ENCODE measurements at regions of chr21 and their contacts with region 1.

Region 1: DNA sequence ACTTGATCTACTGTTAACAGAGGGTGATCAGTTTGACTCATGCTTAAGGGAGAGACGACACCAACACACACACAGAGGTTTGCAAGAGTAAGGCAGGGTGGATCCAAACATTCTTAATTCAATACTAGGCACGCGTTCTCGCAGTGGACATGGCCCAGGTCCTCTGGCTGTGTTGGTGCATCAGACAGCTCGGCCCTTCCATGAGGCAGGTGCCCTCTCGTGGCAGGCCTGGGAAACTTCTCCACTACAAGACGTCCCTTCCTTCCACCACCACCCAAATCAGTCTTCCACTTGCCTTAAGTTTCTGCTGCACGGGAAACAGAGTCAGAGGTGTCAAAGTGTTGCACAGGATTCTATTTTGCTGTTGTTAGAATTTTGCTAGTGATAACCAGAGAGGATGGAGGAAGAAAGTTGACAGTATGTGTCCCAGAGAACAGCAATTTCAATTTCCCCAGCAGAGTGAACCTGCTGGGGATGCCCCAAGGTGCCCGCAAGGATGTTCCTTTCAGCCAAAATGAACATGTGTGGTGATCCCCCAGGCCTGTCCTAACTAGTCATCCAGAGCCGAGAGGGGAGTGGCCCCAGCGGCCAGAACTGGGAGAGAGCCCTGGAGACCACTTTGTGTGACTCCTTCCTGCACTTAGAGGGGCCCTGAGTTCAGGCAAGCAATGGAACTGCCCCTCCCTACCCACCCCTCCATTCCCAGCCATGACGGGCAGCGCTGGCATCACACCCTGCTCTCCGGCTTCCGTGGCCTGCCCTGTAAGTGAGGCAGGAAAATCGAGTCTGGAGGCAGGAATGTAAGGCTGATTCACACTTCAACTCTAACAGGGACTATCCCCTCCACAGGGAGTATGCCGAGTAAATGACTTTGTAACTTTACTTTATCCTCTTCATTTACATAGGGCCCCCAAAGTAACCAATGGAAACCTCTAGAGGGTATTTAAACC is 34.8 kb downstream of the MX1 start:
- DNase-seq: peak; percentile 72
- ATAC-seq: peak; percentile 97
- H3K4me3 ChIP-seq: no peak overlapping the region
- H3K27ac ChIP-seq: no peak overlapping the region
- H3K4me1 ChIP-seq: no peaks in the 10 kb centered on the region
- H3K27me3 ChIP-seq: no peaks in the 10 kb centered on the region
- CTCF ChIP-seq: peak; percentile 73
- POLR2A ChIP-seq: no peak
- RAD21 ChIP-seq: peak; percentile 78

Region 2: GRCh38 chr21:41121785-41122421 is 338.9 kb before region 1 on chr21:
- CTCF ChIA-PET with region 1: no interaction called
- POLR2A ChIA-PET with region 1: no interaction called
- dilution Hi-C with region 1: no loop called
- in situ Hi-C with region 1: loop called (anchors 10 kb)
- intact Hi-C with region 1: loop called (anchors 2 kb)
- DNase-seq: peak; percentile 63
- ATAC-seq: peak; percentile 82
- H3K4me3 ChIP-seq: no peak overlapping the region
- H3K27ac ChIP-seq: no peak overlapping the region
- H3K4me1 ChIP-seq: no peaks in the 10 kb centered on the region
- H3K27me3 ChIP-seq: peaks cover 1% of the 10 kb centered on the region
- CTCF ChIP-seq: peak; percentile 78
- POLR2A ChIP-seq: no peak
- RAD21 ChIP-seq: peak; percentile 72

Region 3: GRCh38 chr21:41289426-41289825 is 171.4 kb before region 1 on chr21:
- CTCF ChIA-PET with region 1: no interaction called
- POLR2A ChIA-PET with region 1: interaction called, 3 read pairs
- dilution Hi-C with region 1: no loop called
- in situ Hi-C with region 1: loop called (anchors 5 kb)
- intact Hi-C with region 1: no loop called
- DNase-seq: peak; percentile 4
- ATAC-seq: peak; percentile 35
- H3K4me3 ChIP-seq: no peak overlapping the region
- H3K27ac ChIP-seq: no peak overlapping the region
- H3K4me1 ChIP-seq: no peaks in the 10 kb centered on the region
- H3K27me3 ChIP-seq: peaks cover 12% of the 10 kb centered on the region
- CTCF ChIP-seq: no peak
- POLR2A ChIP-seq: no peak
- RAD21 ChIP-seq: no peak

Region 4: DNA sequence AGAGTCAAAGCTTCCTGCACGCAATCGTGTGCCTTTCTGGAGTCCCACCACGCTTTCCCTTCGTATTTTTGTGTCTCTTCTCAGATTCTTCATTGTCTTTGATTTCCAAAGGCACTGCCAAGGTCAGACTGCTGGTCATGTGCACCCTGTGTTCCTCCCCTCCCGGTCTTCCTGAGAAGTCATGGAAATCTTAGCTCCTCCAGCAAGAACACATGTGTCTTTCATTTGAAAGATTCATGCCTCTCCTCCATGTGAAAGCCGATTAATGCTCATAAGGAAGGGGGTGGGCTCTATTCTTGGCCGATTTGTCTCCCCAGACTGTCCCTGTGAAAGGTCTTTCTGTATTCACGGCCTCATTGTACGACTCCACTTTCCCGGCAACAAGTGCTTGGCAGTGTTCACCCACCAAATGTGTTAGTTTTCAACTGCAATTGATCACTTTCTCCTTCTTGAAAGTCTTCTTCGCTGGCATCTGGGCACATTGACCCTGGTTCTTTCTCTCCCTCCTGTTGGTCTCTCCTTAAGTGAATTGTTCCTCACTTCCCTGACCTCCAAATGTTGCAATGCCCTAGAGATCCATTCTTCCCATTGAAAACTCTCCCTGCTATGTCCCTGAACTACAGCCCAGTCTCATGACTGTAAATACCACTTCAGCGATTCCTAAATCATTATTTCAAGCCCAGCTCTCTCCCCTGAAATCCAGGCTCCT is 73.7 kb before region 1 on chr21:
- CTCF ChIA-PET with region 1: no interaction called
- POLR2A ChIA-PET with region 1: no interaction called
- dilution Hi-C with region 1: no loop called
- in situ Hi-C with region 1: no loop called
- intact Hi-C with region 1: no loop called
- DNase-seq: no peak
- ATAC-seq: no peak
- H3K4me3 ChIP-seq: no peak overlapping the region
- H3K27ac ChIP-seq: no peak overlapping the region
- H3K4me1 ChIP-seq: no peaks in the 10 kb centered on the region
- H3K27me3 ChIP-seq: no peaks in the 10 kb centered on the region; the same call in 1 of the 2 replicates
- CTCF ChIP-seq: no peak
- POLR2A ChIP-seq: no peak
- RAD21 ChIP-seq: no peak

Region 5: GRCh38 chr21:41425954-41426675 is 34.7 kb before region 1 on chr21 and contains the start of gene MX1:
- CTCF ChIA-PET with region 1: no interaction called
- POLR2A ChIA-PET with region 1: no interaction called
- dilution Hi-C with region 1: no loop called
- in situ Hi-C with region 1: no loop called
- intact Hi-C with region 1: no loop called
- DNase-seq: peak; percentile 10
- ATAC-seq: peak; percentile 86
- H3K4me3 ChIP-seq: peak within 1 kb of the TSS; percentile 58
- H3K27ac ChIP-seq: no peak within 1 kb of the TSS
- H3K4me1 ChIP-seq: no peaks in the 10 kb centered on the region; the same call in 1 of the 2 replicates
- H3K27me3 ChIP-seq: peaks cover 21% of the 10 kb centered on the region
- CTCF ChIP-seq: no peak
- POLR2A ChIP-seq: no peak
- RAD21 ChIP-seq: no peak
- total RNA-seq, gene MX1: 1.9 and 2.5 TPM in 2 replicates

Region 6: GRCh38 chr21:41816220-41817165 is 355.6 kb after region 1 on chr21:
- CTCF ChIA-PET with region 1: no interaction called
- POLR2A ChIA-PET with region 1: no interaction called
- dilution Hi-C with region 1: no loop called
- in situ Hi-C with region 1: no loop called
- intact Hi-C with region 1: loop called (anchors 2 kb)
- DNase-seq: peak; percentile 46
- ATAC-seq: peak; percentile 84
- H3K4me3 ChIP-seq: no peak overlapping the region
- H3K27ac ChIP-seq: no peak overlapping the region
- H3K4me1 ChIP-seq: no peaks in the 10 kb centered on the region
- H3K27me3 ChIP-seq: no peaks in the 10 kb centered on the region
- CTCF ChIP-seq: peak; percentile 75
- POLR2A ChIP-seq: no peak
- RAD21 ChIP-seq: peak; percentile 76

Region 7: GRCh38 chr21:42062236-42063022 is 601.6 kb after region 1 on chr21:
- CTCF ChIA-PET with region 1: no interaction called
- POLR2A ChIA-PET with region 1: no interaction called
- dilution Hi-C with region 1: no loop called
- in situ Hi-C with region 1: no loop called
- intact Hi-C with region 1: no loop called
- DNase-seq: no peak
- ATAC-seq: no peak
- H3K4me3 ChIP-seq: no peak overlapping the region
- H3K27ac ChIP-seq: no peak overlapping the region
- H3K4me1 ChIP-seq: peaks cover 11% of the 10 kb centered on the region
- H3K27me3 ChIP-seq: peaks cover 9% of the 10 kb centered on the region; the same call in 1 of the 2 replicates
- CTCF ChIP-seq: no peak
- POLR2A ChIP-seq: no peak
- RAD21 ChIP-seq: no peak

Measured in IMR-90 (cell line).